T-cell (primary cell): ENCODE measurements at regions of chr2 and their contacts with region 1.

Region 1: DNA sequence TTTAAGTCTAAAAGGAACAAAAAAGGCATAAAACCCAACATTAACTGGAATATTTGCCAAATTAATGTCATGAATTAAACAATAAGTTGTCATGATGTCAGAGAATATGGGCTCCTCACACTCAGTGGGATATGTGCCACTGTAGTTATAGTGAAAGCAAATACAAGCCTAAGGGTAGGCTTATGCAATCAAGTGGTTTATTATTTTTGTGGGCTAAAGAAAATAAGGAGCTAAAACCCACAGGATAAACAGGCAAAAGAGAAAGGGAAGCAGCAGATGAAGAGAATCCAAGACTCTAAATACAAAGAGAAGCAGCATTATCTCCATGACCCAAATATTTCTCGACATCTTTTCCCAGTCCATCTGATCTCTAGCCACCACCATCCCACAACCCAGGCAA is 17.5 kb downstream of the YWHAQ start:
- DNase-seq: no peak
- ATAC-seq: no peak
- H3K4me3 ChIP-seq: no peak overlapping the region
- H3K4me3 Mint-ChIP-seq: no peak overlapping the region
- H3K27ac ChIP-seq: no peak overlapping the region
- H3K27ac Mint-ChIP-seq: no peak overlapping the region
- H3K4me1 ChIP-seq: peaks cover 4 to 15% of the 10 kb centered on the region in 2 experiments
- H3K4me1 Mint-ChIP-seq: peaks cover 90 to 97% (median 93%) of the 10 kb centered on the region in 3 donors
- H3K27me3 ChIP-seq: no peaks in the 10 kb centered on the region
- H3K27me3 Mint-ChIP-seq: no peaks in the 10 kb centered on the region

Region 2: GRCh38 chr2:9594366-9595054 is 18.8 kb before region 1 on chr2:
- CTCF ChIA-PET with region 1: interaction called, 4 to 6 read pairs
- POLR2A ChIA-PET with region 1: interaction called, 10 to 18 read pairs
- DNase-seq: no peak
- ATAC-seq: no peak
- H3K4me3 ChIP-seq: no peak overlapping the region
- H3K4me3 Mint-ChIP-seq: no peak overlapping the region
- H3K27ac ChIP-seq: peak overlapping the region; percentile 0
- H3K27ac Mint-ChIP-seq: peak overlapping the region; percentile 34 to 44
- H3K4me1 ChIP-seq: peaks cover 0 to 15% of the 10 kb centered on the region in 2 experiments
- H3K4me1 Mint-ChIP-seq: peaks cover 43 to 62% (median 50%) of the 10 kb centered on the region in 3 donors
- H3K27me3 ChIP-seq: no peaks in the 10 kb centered on the region
- H3K27me3 Mint-ChIP-seq: no peaks in the 10 kb centered on the region

Region 3: DNA sequence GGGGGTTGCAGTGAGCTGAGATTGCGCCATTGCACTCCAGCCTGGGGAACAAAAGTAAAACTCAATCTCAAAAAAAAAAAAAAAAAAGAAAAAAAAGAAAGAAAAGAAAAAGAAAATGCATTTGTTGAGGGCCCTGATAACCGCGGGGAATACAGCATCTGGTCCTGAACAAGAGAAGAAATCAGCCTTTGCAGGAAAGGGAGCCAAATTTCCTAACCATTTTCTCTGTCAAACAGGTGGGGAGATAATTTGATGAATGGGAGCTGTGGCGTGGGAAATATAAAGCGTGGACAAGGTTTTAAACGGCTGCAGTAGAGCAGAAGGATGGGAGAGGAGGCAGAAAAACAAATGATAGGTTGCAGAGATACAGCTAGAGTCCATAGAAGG is 1851.8 kb after region 1 on chr2:
- CTCF ChIA-PET with region 1: interaction called in 1 of 2 experiments, 10 read pairs
- POLR2A ChIA-PET with region 1: no interaction called
- DNase-seq: no peak
- ATAC-seq: no peak
- H3K4me3 ChIP-seq: peak overlapping the region; percentile 91 to 95
- H3K4me3 Mint-ChIP-seq: peak overlapping the region; percentile 82 to 97 (median 91)
- H3K27ac ChIP-seq: no peak overlapping the region
- H3K27ac Mint-ChIP-seq: peak overlapping the region; percentile 71 to 93
- H3K4me1 ChIP-seq: peaks cover 8 to 24% of the 10 kb centered on the region in 2 experiments
- H3K4me1 Mint-ChIP-seq: peaks cover 43 to 45% (median 43%) of the 10 kb centered on the region in 3 donors
- H3K27me3 ChIP-seq: no peaks in the 10 kb centered on the region
- H3K27me3 Mint-ChIP-seq: no peaks in the 10 kb centered on the region